ENCODE measurements at regions of chr1 and their contacts with region 1.

Region 1: DNA sequence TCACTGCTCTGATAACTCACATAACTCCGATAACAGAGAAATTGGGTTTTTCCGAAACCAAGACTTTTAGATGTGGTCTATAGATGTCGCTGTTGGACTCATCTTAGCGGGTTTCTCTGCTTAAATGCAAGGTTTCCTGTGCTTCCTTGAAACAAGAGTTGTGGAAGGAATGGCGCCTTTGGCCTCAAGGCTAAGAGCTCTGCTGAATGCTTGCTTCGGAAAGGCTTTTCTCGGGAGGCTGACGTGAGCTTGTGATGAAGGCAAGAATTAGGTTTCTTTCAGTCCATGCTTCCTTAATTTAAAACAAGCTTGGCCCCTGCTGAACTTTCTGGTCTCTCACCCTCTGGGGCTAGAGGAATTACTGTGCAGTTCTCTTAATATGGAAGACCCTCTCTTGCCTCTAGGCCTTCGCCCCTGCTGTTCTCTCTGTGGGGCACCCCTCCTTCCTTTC is 113.5 kb downstream of the MAP3K21 start:
- DNase-seq: peak; percentile 11
- H3K4me3 ChIP-seq: no peak overlapping the region
- H3K27ac ChIP-seq: no peak overlapping the region
- H3K4me1 ChIP-seq: no peaks in the 10 kb centered on the region
- H3K27me3 ChIP-seq: no peaks in the 10 kb centered on the region
- CTCF ChIP-seq: peak in 3 of 4 experiments; percentile 50 to 72 (median 61)
- POLR2A ChIP-seq: no peak

Region 2: DNA sequence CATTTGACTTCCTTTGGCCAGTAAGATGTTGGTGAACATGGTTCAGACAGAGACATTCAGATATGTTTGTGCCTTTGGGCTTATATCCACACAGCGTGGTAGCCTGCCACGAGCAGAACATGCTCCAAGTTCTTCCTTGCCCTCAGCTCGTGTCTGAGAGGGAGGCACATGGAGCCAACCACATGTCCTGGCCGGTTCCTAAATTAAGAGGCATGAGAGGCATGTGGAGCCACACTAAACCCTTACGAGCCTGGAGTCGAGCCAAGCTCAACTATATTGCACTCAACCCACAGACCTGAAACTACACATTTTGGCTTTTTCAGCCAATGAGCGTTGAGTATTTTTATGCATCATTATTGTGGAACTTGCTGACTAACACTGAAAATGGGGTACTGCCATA is 39.2 kb after region 1 on chr1:
- intact Hi-C with region 1: no loop called
- DNase-seq: no peak
- H3K4me3 ChIP-seq: no peak overlapping the region
- H3K27ac ChIP-seq: no peak overlapping the region
- H3K4me1 ChIP-seq: no peaks in the 10 kb centered on the region
- H3K27me3 ChIP-seq: peaks cover 2% of the 10 kb centered on the region
- CTCF ChIP-seq: no peak
- POLR2A ChIP-seq: no peak

Region 3: DNA sequence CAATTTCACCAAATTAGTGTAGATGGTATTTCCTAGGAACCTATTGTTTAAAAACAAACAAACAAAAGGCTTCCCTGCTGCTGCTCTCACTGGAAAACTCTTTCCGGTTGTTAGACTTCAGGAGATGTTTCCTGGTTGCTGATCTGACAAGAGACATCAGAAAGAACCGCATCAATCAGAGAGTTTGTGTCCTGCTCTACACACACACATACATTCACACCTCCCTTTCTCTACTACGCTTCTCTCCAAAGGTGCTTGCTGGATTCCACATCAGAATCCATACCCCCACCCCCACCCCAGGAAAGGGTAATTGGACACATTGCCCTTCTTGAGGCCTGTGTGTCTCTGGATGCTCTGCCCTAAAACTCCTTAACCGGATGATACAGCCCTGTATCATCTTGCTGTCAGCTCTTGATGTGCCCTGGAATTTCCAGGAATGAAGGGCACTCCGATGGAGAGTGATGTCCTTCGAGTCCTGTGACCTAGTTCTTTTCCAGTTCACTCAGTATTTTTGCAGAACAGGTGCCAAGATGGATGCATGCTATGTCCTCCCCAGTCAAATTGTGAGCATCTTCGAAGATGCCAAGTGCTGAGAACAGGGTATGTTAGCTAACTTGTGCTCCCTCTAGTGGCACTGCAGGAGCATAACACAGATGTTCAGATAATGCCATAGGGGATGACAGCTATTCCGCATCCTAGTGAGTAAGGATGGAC is 349.8 kb after region 1 on chr1:
- intact Hi-C with region 1: loop called (anchors 2 kb)
- DNase-seq: peak; percentile 21
- H3K4me3 ChIP-seq: no peak overlapping the region
- H3K27ac ChIP-seq: no peak overlapping the region
- H3K4me1 ChIP-seq: no peaks in the 10 kb centered on the region
- H3K27me3 ChIP-seq: no peaks in the 10 kb centered on the region
- CTCF ChIP-seq: peak; percentile 56 to 89 (median 87)
- POLR2A ChIP-seq: no peak

Region 4: GRCh38 chr1:233805786-233806185 is 364.8 kb after region 1 on chr1:
- intact Hi-C with region 1: no loop called
- DNase-seq: no peak
- H3K4me3 ChIP-seq: no peak overlapping the region
- H3K27ac ChIP-seq: no peak overlapping the region
- H3K4me1 ChIP-seq: no peaks in the 10 kb centered on the region
- H3K27me3 ChIP-seq: no peaks in the 10 kb centered on the region
- CTCF ChIP-seq: no peak
- POLR2A ChIP-seq: no peak

Region 5: GRCh38 chr1:234065794-234066447 is 624.9 kb after region 1 on chr1:
- intact Hi-C with region 1: loop called (anchors 10 kb)
- DNase-seq: peak; percentile 68
- H3K4me3 ChIP-seq: no peak overlapping the region
- H3K27ac ChIP-seq: no peak overlapping the region
- H3K4me1 ChIP-seq: no peaks in the 10 kb centered on the region
- H3K27me3 ChIP-seq: no peaks in the 10 kb centered on the region
- CTCF ChIP-seq: peak; percentile 41 to 72 (median 64)
- POLR2A ChIP-seq: no peak

Measured in prostate gland (tissue), 2 donors.